PC-9 (cell line): ENCODE measurements at regions of chr15 and their contacts with region 1.

Region 1: DNA sequence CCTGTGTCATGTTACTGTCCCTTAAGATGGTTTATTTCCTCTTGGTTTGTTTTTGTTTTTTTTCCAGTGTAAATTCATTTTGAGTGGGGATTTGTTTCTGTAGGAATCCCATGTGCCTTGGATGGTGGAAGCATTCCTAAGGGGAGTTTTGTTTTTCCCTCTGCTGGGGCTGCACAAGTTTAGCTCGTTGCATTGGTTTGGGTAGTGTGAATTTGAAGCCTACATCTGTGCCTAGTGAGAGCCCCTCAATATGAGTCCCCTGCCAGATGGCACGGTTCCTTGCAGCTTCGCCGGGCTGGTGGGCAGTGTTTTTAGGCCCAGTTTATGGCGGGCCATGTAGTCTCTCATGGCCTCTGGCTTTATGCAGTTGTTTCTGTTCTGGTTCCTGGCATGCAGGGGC is 17.7 kb downstream of the ARID3B start:
- DNase-seq: no peak
- H3K4me3 ChIP-seq: no peak overlapping the region
- H3K27ac ChIP-seq: no peak overlapping the region
- H3K4me1 ChIP-seq: no peaks in the 10 kb centered on the region
- H3K27me3 ChIP-seq: no peaks in the 10 kb centered on the region
- CTCF ChIP-seq: no peak

Region 2: GRCh38 chr15:74470631-74471395 is 87.9 kb before region 1 on chr15:
- CTCF ChIA-PET with region 1: no interaction called
- POLR2A ChIA-PET with region 1: no interaction called
- intact Hi-C with region 1: no loop called
- DNase-seq: no peak
- H3K4me3 ChIP-seq: no peak overlapping the region
- H3K27ac ChIP-seq: no peak overlapping the region
- H3K4me1 ChIP-seq: no peaks in the 10 kb centered on the region
- H3K27me3 ChIP-seq: no peaks in the 10 kb centered on the region
- CTCF ChIP-seq: no peak

Region 3: GRCh38 chr15:74573987-74574386 is 15.3 kb after region 1 on chr15:
- CTCF ChIA-PET with region 1: no interaction called
- POLR2A ChIA-PET with region 1: no interaction called
- intact Hi-C with region 1: loop called (anchors 1 kb)
- DNase-seq: no peak
- H3K4me3 ChIP-seq: no peak overlapping the region
- H3K27ac ChIP-seq: no peak overlapping the region
- H3K4me1 ChIP-seq: no peaks in the 10 kb centered on the region
- H3K27me3 ChIP-seq: no peaks in the 10 kb centered on the region
- CTCF ChIP-seq: no peak